ENCODE measurements at regions of chr10 and their contacts with region 1.

Region 1: DNA sequence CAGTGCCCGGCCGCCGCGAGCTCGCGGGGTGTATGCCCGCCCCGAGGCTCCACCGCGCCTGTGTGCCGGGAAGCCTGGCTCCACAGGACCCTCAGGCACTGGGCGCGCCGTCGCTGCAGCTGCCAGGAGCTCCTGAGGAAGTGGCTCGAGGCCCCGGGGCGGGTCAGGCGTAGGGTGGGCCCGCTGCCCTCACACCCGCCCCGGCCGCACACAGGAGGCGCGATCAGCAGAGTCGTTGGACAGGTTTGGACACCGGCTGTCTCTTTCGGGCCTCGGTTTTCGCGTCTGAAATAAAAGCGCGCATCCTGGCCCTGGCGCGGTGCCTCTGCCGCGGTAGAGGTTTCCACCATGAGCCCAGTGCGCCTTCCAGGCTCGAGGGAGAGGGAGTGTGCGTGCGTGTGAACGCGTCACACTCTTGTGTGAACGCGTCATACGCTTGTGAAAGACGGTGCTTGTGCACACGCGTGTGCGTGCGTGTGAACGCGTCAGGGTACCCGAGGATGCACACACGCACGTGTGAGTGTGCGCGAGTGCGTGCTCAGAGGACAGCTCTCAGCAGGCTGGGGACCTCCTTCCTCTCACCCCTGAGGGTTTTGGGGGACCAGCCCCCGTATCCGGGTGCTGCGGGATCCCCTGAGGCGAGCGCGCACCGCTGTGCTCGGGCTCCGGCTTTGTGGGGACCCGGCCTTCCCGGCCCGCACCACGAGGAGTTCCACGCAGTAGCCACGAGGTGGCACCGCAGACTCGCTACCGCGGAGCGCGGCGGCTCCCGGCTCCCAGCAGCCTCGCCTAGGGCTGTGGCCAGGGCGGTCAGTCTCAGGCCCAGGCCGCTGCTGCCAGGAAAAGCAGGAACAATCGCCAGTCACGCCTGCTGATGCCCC is 83.8 kb downstream of the BMS1 start:
- DNase-seq: peak in 1 of 2 donors; percentile 75
- H3K4me3 ChIP-seq: peak overlapping the region in 1 of 2 donors; percentile 28
- H3K27ac ChIP-seq: no peak overlapping the region
- H3K4me1 ChIP-seq: peaks cover 12% of the 10 kb centered on the region
- H3K27me3 ChIP-seq: peaks cover 4% of the 10 kb centered on the region
- CTCF ChIP-seq: peak; percentile 16 to 50 (median 47)
- POLR2A ChIP-seq: no peak

Region 2: GRCh38 chr10:42454313-42454712 is 412.0 kb before region 1 on chr10:
- intact Hi-C with region 1: no loop called
- DNase-seq: no peak
- H3K4me3 ChIP-seq: no peak overlapping the region
- H3K27ac ChIP-seq: no peak overlapping the region
- H3K4me1 ChIP-seq: no peaks in the 10 kb centered on the region
- H3K27me3 ChIP-seq: no peaks in the 10 kb centered on the region
- CTCF ChIP-seq: no peak
- POLR2A ChIP-seq: no peak

Region 3: DNA sequence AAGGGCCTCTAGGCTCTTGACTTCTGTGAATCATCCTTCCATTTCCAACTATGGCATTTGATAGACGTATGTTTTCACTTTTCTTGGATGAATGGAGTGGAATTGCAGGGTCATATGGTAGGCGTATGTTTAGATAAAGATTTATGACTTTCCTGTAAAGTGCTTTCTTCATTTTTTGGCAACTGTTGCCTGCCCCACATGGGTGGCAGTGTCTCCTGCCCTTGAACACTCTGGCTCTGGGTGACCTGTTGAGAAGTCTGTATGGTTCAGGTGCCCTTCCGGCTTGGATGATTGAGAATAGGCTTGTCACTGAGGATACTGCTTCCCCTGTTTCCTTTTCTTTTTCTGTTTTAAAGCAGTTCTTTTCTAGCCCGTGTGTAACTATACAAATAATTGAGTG is 233.6 kb after region 1 on chr10:
- intact Hi-C with region 1: loop called (anchors 5 kb)
- DNase-seq: no peak
- H3K4me3 ChIP-seq: no peak overlapping the region
- H3K27ac ChIP-seq: no peak overlapping the region
- H3K4me1 ChIP-seq: peaks cover 7% of the 10 kb centered on the region
- H3K27me3 ChIP-seq: no peaks in the 10 kb centered on the region
- CTCF ChIP-seq: no peak
- POLR2A ChIP-seq: no peak

Measured in vagina (tissue), 2 donors.